CD4-positive, alpha-beta memory T cell (primary cell): ENCODE measurements at regions of chr12 and their contacts with region 1.

Region 1: GRCh38 chr12:48414021-48414420 is 58.3 kb upstream of the ANP32D start:
- DNase-seq: no peak
- H3K4me3 ChIP-seq: no peak overlapping the region
- H3K4me3 Mint-ChIP-seq: no peak overlapping the region
- H3K27ac ChIP-seq: no peak overlapping the region
- H3K27ac Mint-ChIP-seq: no peak overlapping the region
- H3K4me1 ChIP-seq: peaks cover 17% of the 10 kb centered on the region
- H3K4me1 Mint-ChIP-seq: peaks cover 16 to 17% (median 17%) of the 10 kb centered on the region in 4 donors
- H3K27me3 ChIP-seq: no peaks in the 10 kb centered on the region
- H3K27me3 Mint-ChIP-seq: peaks cover 18% of the 10 kb centered on the region in 2 donors

Region 2: DNA sequence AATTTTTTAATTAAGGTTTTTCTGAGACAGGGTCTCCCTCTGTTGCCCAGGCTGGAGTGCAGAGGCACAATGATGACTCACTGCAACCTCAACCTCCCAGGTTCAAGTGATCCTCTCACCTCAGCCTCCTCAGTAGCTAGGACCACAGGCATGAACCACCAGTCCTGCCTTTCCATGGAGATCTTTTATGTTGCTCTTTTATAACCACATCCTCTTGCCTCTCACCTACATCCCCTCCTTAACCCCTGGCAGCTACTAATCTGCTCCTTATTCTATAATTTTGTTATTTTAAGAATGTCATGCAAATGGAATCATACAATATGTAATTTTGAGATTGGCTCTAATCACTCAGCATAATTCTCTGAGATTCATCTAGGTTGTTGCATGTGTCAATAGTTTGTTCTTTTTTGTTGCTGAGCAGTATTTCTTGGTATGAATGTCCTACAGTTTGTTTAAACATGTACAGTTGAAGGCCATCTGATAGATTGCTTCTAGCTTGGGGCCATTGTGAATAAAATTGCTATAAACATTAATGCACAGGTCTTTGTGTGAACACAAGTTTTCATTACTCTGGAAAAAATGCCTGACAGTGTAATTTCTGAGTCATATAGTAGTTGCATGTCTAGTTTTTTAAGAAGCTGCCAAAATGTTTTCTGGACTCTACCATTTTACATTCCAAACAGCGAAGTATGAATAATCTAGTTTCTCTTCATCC is 1085.0 kb before region 1 on chr12:
- CTCF ChIA-PET with region 1: no interaction called
- POLR2A ChIA-PET with region 1: no interaction called
- intact Hi-C with region 1: no loop called
- DNase-seq: no peak
- H3K4me3 ChIP-seq: no peak overlapping the region
- H3K4me3 Mint-ChIP-seq: peak overlapping the region in 2 of 8 donors; percentile 2 to 38
- H3K27ac ChIP-seq: no peak overlapping the region
- H3K27ac Mint-ChIP-seq: peak overlapping the region in 4 of 7 donors; percentile 14 to 92 (median 48)
- H3K4me1 ChIP-seq: peaks cover 15% of the 10 kb centered on the region
- H3K4me1 Mint-ChIP-seq: peaks cover 12 to 22% (median 19%) of the 10 kb centered on the region in 4 donors
- H3K27me3 ChIP-seq: no peaks in the 10 kb centered on the region
- H3K27me3 Mint-ChIP-seq: no peaks in the 10 kb centered on the region

Region 3: GRCh38 chr12:48165094-48165981 is 248.7 kb before region 1 on chr12:
- CTCF ChIA-PET with region 1: no interaction called
- POLR2A ChIA-PET with region 1: no interaction called
- intact Hi-C with region 1: no loop called
- DNase-seq: peak; percentile 61 to 73 (median 71)
- H3K4me3 ChIP-seq: no peak overlapping the region
- H3K4me3 Mint-ChIP-seq: no peak overlapping the region
- H3K27ac ChIP-seq: no peak overlapping the region
- H3K27ac Mint-ChIP-seq: no peak overlapping the region
- H3K4me1 ChIP-seq: no peaks in the 10 kb centered on the region
- H3K4me1 Mint-ChIP-seq: peaks cover 0 to 6% (median 1%) of the 10 kb centered on the region in 4 donors
- H3K27me3 ChIP-seq: no peaks in the 10 kb centered on the region
- H3K27me3 Mint-ChIP-seq: peaks cover 6 to 7% of the 10 kb centered on the region in 2 donors

Region 4: GRCh38 chr12:48350249-48351021 is 63.6 kb before region 1 on chr12 and contains the start of gene ZNF641:
- CTCF ChIA-PET with region 1: no interaction called
- POLR2A ChIA-PET with region 1: interaction called, 19 read pairs
- intact Hi-C with region 1: no loop called
- DNase-seq: peak; percentile 81 to 86 (median 85)
- H3K4me3 ChIP-seq: peak within 1 kb of the TSS; percentile 57 to 72
- H3K4me3 Mint-ChIP-seq: peak within 1 kb of the TSS; percentile 92 to 97 (median 96)
- H3K27ac ChIP-seq: peak within 1 kb of the TSS; percentile 87
- H3K27ac Mint-ChIP-seq: peak within 1 kb of the TSS; percentile 93 to 98 (median 96)
- H3K4me1 ChIP-seq: peaks cover 40% of the 10 kb centered on the region
- H3K4me1 Mint-ChIP-seq: peaks cover 21 to 44% (median 35%) of the 10 kb centered on the region in 4 donors
- H3K27me3 ChIP-seq: no peaks in the 10 kb centered on the region
- H3K27me3 Mint-ChIP-seq: no peaks in the 10 kb centered on the region
- total RNA-seq, gene ZNF641: 39.9 to 41.2 TPM